Activated B cell treated with CpG ODN at 0.5 μM for 24 hours (primary cell): ENCODE measurements at regions of chr1 and their contacts with region 1.

Region 1: DNA sequence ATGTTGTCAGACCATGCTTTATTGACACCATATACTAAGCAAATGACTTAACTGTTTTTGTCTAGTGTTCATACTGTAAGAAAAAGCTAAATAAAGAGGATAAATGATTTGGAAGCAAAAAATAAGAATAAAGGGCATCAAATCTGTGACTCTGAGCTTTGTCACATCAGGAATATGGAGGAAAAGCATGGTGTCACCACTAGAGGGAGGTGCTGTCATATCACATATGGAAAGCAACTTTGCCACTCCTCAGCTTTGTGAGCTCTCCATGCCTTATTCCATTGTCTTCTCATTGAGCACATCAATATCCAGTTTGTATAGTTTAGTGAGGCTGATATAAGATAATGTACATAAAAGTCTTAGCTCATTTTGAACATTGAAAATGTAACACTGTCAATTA is 20.8 kb upstream of the GBP1 start:
- DNase-seq: no peak
- ATAC-seq: peak; percentile 37
- H3K4me3 Mint-ChIP-seq: no peak overlapping the region
- H3K27ac Mint-ChIP-seq: no peak overlapping the region
- H3K4me1 Mint-ChIP-seq: peaks cover 4% of the 10 kb centered on the region
- H3K27me3 Mint-ChIP-seq: no peaks in the 10 kb centered on the region
- CTCF ChIP-seq: no peak

Region 2: GRCh38 chr1:89065079-89065868 is 20.5 kb before region 1 on chr1 and contains the start of gene GBP1:
- CTCF ChIA-PET with region 1: interaction called, 11 read pairs
- POLR2A ChIA-PET with region 1: interaction called, 6 read pairs
- intact Hi-C with region 1: no loop called
- DNase-seq: no peak
- ATAC-seq: peak; percentile 72
- H3K4me3 Mint-ChIP-seq: peak within 1 kb of the TSS; percentile 90
- H3K27ac Mint-ChIP-seq: peak within 1 kb of the TSS; percentile 86
- H3K4me1 Mint-ChIP-seq: peaks cover 47% of the 10 kb centered on the region
- H3K27me3 Mint-ChIP-seq: no peaks in the 10 kb centered on the region
- CTCF ChIP-seq: no peak
- total RNA-seq, gene GBP1: 24.0 and 27.5 TPM in 2 replicates

Region 3: DNA sequence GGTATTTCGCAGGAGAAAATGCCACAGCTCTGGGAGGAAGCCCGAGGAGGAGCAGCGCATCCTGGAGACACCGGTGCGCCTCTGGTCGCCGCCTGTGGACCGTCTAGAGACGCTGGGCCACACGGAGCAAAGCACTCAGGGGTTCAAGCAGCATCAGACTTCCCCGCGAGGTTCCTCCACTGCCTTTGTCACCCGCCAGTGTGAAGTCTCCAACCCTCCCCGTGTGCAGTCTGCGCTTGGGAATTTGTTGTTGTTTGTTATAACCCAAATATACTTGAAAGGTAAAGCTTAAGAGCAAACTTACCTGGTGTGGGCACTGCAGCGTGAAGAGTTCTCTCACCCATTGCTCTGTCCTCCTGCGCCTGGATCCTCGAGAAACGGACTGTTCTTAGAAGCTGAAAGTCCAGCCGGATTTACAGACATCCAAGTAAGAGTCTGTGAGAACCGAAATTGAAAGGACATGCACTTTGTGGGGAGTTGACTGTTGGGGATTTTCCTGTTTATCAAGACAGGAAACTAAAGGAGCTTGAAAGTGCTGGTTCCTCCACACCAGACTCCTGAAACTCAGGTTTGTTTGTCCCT is 112.8 kb after region 1 on chr1 and contains the start of gene GBP4:
- CTCF ChIA-PET with region 1: interaction called, 5 read pairs
- POLR2A ChIA-PET with region 1: interaction called, 9 read pairs
- intact Hi-C with region 1: loop called (anchors 5 kb)
- DNase-seq: peak; percentile 27
- ATAC-seq: peak; percentile 47
- H3K4me3 Mint-ChIP-seq: peak within 1 kb of the TSS; percentile 96
- H3K27ac Mint-ChIP-seq: peak within 1 kb of the TSS; percentile 92
- H3K4me1 Mint-ChIP-seq: peaks cover 76% of the 10 kb centered on the region
- H3K27me3 Mint-ChIP-seq: no peaks in the 10 kb centered on the region
- CTCF ChIP-seq: no peak
- total RNA-seq, gene GBP4: 19.2 and 19.5 TPM in 2 replicates